Activated naive CD4-positive, alpha-beta T cell treated with anti-CD3 and anti-CD28 coated beads for 36 hours (primary cell): ENCODE measurements at regions of chr12 and their contacts with region 1.

Region 1: DNA sequence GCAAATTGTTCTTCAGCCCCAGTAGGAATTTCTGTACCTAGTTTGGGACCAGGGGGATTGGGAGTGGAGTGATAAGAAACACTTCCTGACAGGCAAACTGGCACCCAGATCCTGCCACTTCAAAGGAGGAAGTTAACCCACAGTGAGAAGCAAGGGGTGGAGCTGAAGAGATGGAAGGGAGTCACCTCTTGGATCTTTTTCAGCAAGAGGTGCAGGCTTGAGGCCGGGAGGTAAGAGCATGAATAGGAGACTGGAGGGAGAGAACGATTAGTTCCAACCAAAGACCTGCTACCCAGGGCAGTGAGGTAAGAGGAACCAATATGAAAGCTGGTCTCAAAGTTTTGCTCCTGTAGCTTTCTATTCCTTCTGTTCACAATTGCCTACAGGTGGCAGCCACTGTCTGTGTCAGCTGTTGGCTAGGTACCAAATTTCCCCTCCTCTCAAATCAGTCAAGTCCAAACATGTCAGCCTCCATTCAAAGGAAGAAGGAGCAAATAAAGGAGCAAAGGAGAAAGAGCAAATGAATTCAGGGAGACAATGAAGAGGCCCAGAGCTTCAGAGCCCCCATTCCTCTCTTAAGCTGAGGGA is 14.9 kb upstream of the TAC3 start:
- DNase-seq: peak; percentile 64
- H3K4me3 Mint-ChIP-seq: peak overlapping the region; percentile 2
- H3K27ac Mint-ChIP-seq: peak overlapping the region; percentile 42
- H3K4me1 Mint-ChIP-seq: peaks cover 55% of the 10 kb centered on the region
- H3K27me3 Mint-ChIP-seq: no peaks in the 10 kb centered on the region

Region 2: GRCh38 chr12:56581418-56582145 is 449.6 kb before region 1 on chr12:
- CTCF ChIA-PET with region 1: no interaction called
- intact Hi-C with region 1: no loop called
- DNase-seq: peak; percentile 33
- H3K4me3 Mint-ChIP-seq: no peak overlapping the region
- H3K27ac Mint-ChIP-seq: no peak overlapping the region
- H3K4me1 Mint-ChIP-seq: peaks cover 19% of the 10 kb centered on the region
- H3K27me3 Mint-ChIP-seq: no peaks in the 10 kb centered on the region

Region 3: GRCh38 chr12:56979628-56980027 is 51.6 kb before region 1 on chr12:
- CTCF ChIA-PET with region 1: no interaction called
- intact Hi-C with region 1: no loop called
- DNase-seq: no peak
- H3K4me3 Mint-ChIP-seq: no peak overlapping the region
- H3K27ac Mint-ChIP-seq: no peak overlapping the region
- H3K4me1 Mint-ChIP-seq: no peaks in the 10 kb centered on the region
- H3K27me3 Mint-ChIP-seq: no peaks in the 10 kb centered on the region

Region 4: DNA sequence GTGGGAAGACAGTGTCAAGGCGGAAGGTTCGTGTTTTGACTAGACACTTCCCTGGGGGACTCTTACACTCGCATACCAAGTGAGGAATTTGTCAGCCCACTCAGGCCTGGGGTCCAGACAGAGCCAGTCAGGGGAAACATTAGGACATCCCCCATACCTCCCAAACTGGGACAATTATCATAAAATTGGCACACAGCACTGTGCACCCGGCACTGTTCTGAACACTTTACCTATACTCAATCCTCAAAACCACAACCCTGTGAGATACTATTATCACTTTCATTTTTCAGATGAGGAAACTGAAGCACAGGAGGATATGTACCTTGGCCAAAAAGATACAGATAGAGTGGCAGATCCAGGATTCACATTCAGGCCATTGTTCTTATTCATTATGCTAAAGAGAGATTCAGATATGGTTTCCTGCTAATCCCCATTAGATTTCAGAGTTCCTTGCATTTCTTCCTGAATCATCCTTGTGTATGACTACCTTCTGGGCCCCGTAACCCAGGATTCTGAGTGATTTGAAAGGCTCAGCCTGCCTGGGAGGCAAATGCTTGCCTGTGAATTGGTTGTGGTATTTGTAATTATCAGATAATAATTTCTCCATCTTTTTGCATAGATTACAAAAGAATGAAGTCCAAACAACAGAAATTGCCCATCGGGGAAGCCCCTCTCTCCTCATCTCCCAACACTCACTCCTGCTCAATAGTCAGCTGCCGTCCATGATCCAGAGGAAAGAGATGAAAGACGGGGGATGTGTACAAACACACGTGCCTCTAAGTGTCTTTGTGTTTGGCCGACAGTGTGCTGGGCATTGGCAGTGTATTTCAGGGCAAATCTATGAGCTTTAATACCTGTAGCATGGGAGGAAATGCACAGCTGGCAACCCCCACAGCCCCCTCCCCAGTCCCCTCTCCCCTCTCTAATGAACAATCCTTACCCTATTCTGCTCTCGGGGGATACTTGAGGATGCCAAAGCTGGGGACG is 19.5 kb before region 1 on chr12:
- CTCF ChIA-PET with region 1: interaction called, 25 read pairs
- intact Hi-C with region 1: no loop called
- DNase-seq: peak; percentile 71
- H3K4me3 Mint-ChIP-seq: peak overlapping the region; percentile 20
- H3K27ac Mint-ChIP-seq: peak overlapping the region; percentile 59
- H3K4me1 Mint-ChIP-seq: peaks cover 61% of the 10 kb centered on the region
- H3K27me3 Mint-ChIP-seq: no peaks in the 10 kb centered on the region

Region 5: GRCh38 chr12:57046947-57047890 is 16.0 kb after region 1 on chr12:
- CTCF ChIA-PET with region 1: interaction called, 9 read pairs
- intact Hi-C with region 1: loop called (anchors 2 kb)
- DNase-seq: peak; percentile 83
- H3K4me3 Mint-ChIP-seq: no peak overlapping the region
- H3K27ac Mint-ChIP-seq: peak overlapping the region; percentile 25
- H3K4me1 Mint-ChIP-seq: peaks cover 36% of the 10 kb centered on the region
- H3K27me3 Mint-ChIP-seq: no peaks in the 10 kb centered on the region